A549 (cell line): ENCODE measurements at regions of chr18 and their contacts with region 1.

Region 1: GRCh38 chr18:77207540-77207939 is 42.1 kb upstream of the GALR1 start:
- DNase-seq: peak; percentile 68 to 76
- ATAC-seq: peak; percentile 94 to 95
- H3K4me3 ChIP-seq: no peak overlapping the region
- H3K27ac ChIP-seq: peak overlapping the region; percentile 52 to 72; a peak in 5 of 6 replicates
- H3K4me1 ChIP-seq: peaks cover 16% of the 10 kb centered on the region
- CTCF ChIP-seq: peak; percentile 39; the same call in 2 of the 3 replicates
- EP300 ChIP-seq: no peak
- POLR2A ChIP-seq: no peak
- RAD21 ChIP-seq: 0 out of 5 replicates have a peak, but pooled peaks of 1 of the 2 experiments have one; percentile 16

Region 2: GRCh38 chr18:77067291-77068061 is 140.1 kb before region 1 on chr18:
- CTCF ChIA-PET with region 1: interaction called, 24 read pairs
- POLR2A ChIA-PET with region 1: interaction called, 3 read pairs
- DNase-seq: peak; percentile 55 to 93
- ATAC-seq: peak; percentile 81 to 89
- H3K4me3 ChIP-seq: no peak overlapping the region
- H3K27ac ChIP-seq: peak overlapping the region; percentile 92 to 95
- H3K4me1 ChIP-seq: peaks cover 80% of the 10 kb centered on the region
- CTCF ChIP-seq: no peak
- EP300 ChIP-seq: peak; percentile 61 to 66; a peak in 2 of 5 replicates
- POLR2A ChIP-seq: no peak
- RAD21 ChIP-seq: peak in 1 of 2 experiments; percentile 10; a peak in 2 of 5 replicates